Common myeloid progenitor, CD34-positive (primary cell): ENCODE measurements at regions of chr10 and their contacts with region 1.

Region 1: DNA sequence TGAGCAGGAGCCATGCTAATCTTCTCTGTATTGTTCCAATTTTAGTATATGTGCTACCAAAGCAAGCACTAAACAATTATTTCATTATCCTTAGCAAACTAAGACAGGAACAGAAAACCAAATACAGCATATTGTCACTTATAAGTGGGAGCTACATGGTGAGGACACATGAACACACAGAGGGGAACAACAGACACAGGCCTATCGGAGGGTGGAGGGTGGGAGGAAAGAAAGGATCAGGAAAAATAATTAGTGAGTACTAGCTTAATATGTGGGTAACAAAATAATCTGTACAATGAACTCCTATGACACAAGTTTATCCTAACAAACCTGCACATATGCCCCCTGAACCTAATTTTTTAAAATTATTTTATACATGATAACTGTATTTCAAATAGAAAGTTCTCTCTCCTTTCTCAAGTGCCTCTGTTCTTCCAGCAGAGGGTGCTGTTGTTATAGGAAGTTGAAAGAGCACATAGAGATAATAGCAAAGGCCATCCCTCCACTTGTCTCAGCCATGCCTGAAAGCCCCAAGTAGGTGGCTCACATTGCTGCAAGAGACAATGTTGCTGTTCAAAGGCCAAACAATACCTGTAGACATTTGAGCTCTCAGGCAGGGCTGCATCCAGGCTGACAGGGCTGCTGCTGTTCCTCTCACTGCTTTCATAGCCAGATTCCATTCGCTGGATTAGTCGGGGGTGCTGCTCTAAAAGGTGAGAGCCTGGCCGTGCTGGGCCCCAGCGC is 33.4 kb upstream of the PPP3CB start:
- DNase-seq: peak; percentile 76 to 91 (median 89)
- H3K4me3 ChIP-seq: no peak overlapping the region
- H3K27ac ChIP-seq: no peak overlapping the region
- H3K4me1 ChIP-seq: no peaks in the 10 kb centered on the region
- H3K27me3 ChIP-seq: no peaks in the 10 kb centered on the region

Region 2: DNA sequence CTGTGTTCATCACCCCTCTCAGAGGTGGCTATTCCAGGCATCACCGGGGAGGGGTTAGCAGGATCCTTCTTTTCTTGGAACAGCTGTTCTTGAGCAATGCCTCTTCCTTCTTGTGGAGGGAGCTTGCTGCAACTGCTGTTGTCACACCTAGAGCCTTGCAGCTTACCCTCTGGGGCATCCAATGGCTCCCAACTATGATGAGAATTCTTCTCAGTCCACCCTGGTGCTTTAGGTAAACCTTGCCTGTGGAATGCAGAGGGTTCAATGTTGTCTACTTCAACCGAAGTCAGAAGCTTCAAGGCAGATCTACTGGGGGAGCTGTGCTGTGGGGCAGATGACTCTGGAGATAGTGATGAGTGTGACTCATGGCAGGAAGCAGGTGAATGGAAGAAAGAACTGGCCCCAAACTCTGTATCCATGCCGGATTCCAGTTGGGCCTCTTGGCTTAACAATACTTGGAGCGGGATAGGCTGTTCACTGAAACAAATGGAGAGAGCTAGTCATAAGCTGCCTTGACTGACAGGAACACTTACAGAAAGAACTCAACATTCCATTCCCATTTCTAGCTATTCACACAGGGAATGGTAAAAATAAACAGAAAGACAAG is 11.9 kb before region 1 on chr10:
- CTCF ChIA-PET with region 1: interaction called, 11 read pairs
- POLR2A ChIA-PET with region 1: no interaction called
- DNase-seq: no peak
- H3K4me3 ChIP-seq: no peak overlapping the region
- H3K27ac ChIP-seq: no peak overlapping the region
- H3K4me1 ChIP-seq: no peaks in the 10 kb centered on the region
- H3K27me3 ChIP-seq: no peaks in the 10 kb centered on the region

Region 3: DNA sequence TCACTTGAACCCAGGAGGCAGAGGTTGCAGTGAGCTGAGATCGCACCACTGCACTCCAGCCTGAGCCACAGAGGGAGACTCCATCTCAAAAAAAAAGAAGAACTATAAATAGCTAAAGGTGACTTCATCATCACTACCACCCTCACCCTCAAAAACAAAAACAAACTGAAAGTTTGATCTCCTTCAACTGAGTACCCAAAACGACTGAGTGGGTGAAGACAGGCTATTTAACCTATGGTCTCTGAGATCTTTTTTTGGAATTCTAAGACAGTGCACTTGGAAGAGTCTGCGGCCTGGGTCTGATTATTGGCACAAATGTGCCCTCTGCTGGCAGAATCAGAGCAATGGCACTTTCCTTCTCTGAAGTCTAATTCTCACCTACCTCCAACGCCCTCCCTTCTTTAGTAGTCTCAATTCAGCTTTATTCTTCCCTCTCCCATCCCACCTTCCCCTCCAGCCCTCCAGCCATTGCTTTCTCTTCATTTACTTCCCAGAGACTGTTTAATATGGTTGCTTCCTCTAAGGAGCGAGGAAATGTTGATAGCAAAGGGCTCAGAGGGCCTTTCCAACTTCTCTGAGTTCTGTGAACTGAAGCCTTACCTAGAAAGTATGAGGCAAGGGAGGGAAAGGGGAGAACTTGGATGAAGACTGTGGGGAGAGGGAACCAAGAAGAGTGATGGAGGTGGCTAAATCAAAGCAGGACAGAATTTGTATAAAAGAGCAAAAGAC is 114.9 kb after region 1 on chr10:
- CTCF ChIA-PET with region 1: interaction called, 98 read pairs
- POLR2A ChIA-PET with region 1: interaction called, 4 read pairs
- DNase-seq: peak; percentile 74 to 80 (median 75)
- H3K4me3 ChIP-seq: peak overlapping the region in 4 of 7 experiments; percentile 4 to 70 (median 34)
- H3K27ac ChIP-seq: no peak overlapping the region
- H3K4me1 ChIP-seq: peaks cover 0 to 34% (median 18%) of the 10 kb centered on the region in 4 experiments
- H3K27me3 ChIP-seq: no peaks in the 10 kb centered on the region

Region 4: DNA sequence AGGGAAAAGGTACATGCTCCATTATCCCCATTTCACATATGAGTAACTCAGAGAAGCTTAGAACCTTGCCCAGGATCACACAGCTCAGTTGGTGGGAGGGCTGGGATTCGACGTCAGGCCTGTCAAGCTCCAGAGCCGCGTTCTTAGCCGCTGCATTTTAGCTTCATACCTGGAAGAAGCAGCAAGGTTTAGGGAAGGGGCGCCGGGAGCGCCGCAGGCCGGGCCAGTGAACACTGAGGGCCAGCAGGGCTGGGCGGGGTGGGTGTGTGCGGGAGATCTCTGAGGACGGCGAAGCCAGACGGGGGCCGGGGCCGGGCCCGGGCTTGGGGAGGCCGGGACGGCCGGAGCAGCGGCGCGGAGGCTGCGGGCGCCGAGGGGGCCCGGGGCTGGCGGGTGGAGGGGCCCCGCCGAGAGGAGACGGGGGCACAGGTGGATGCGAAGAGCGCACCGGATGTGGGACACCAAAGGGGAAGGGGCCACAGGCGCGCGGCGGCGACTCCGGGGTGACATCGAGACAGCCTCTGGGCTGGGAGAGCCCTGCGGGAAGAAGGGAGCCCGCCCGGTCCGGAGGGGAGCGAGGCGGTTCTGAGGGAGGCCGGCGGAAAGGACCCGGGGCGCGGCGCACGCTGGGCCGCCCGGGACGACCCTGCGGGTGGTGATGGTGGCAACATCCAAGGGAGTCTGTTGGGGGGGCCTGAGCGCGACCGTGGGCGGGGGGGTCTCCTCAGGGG is 281.6 kb after region 1 on chr10:
- CTCF ChIA-PET with region 1: no interaction called
- POLR2A ChIA-PET with region 1: no interaction called
- DNase-seq: peak; percentile 16 to 63 (median 60)
- H3K4me3 ChIP-seq: peak overlapping the region; percentile 76 to 86 (median 80)
- H3K27ac ChIP-seq: peak overlapping the region; percentile 75 to 87
- H3K4me1 ChIP-seq: peaks cover 0 to 8% (median 7%) of the 10 kb centered on the region in 4 experiments
- H3K27me3 ChIP-seq: no peaks in the 10 kb centered on the region